ENCODE measurements at regions of chr5 and their contacts with region 1.

Region 1: GRCh38 chr5:53123702-53124101 is 14.1 kb upstream of the MOCS2 start:
- DNase-seq: peak; percentile 21
- H3K4me3 ChIP-seq: no peak overlapping the region
- H3K27ac ChIP-seq: no peak overlapping the region
- H3K4me1 ChIP-seq: no peaks in the 10 kb centered on the region
- H3K27me3 ChIP-seq: peaks cover 0 to 3% of the 10 kb centered on the region in 2 experiments
- CTCF ChIP-seq: no peak
- POLR2A ChIP-seq: no peak

Region 2: DNA sequence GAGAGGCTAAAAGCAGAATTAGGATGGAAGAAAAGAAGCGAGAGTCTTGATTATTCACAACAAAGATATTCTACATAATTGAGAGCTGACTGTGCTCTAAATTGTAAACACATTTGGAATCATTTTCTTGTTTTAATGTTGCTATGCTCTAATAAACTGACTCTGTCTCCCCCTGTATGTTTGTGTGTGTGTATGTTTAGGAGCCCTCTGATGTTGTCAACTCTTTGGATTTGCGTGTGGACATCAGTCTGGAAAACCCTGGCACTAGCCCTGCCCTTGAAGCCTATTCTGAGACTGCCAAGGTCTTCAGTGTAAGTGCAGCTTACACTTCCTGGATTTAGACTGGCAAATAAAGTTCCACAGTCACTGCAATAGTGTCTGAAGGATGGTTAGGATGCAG is 52.0 kb before region 1 on chr5:
- CTCF ChIA-PET with region 1: no interaction called
- POLR2A ChIA-PET with region 1: no interaction called
- dilution Hi-C with region 1: no loop called
- intact Hi-C with region 1: no loop called
- DNase-seq: no peak
- H3K4me3 ChIP-seq: no peak overlapping the region
- H3K27ac ChIP-seq: no peak overlapping the region
- H3K4me1 ChIP-seq: peaks cover 14% of the 10 kb centered on the region
- H3K27me3 ChIP-seq: no peaks in the 10 kb centered on the region
- CTCF ChIP-seq: no peak
- POLR2A ChIP-seq: no peak

Region 3: DNA sequence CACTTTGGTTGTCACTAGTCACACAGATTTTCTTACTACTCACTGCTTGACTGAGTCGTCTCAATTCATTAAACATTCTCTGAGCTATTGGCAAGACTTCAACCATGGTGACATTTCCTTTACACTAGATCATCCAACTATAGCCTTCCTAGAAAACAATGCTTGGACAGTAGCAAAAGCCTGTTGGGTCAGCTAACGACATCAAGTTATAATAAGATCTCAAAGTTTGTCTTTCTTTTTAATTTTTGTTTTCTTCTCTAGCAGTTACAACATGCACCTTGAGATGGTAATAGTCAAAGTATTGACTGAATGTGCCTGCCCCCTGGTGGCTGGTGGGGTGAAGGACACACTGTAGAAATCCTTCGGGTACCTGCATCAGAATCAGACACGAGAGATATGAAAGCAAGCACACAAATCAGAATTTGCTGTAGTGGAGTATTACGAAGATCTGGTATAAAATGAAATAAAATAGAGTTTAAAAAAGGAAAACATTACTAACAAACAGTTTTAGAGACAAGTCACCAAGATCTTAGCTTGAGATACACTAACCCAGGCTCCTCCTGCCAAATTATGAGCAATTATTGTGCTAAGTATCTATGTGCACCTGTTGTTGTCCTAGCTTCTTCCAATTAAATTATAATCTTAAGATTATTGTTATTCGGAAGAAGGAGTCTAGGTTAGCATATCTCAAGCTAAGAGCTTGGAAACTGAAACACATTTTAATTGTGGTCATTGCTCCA is 1105.5 kb after region 1 on chr5:
- CTCF ChIA-PET with region 1: interaction called, 17 read pairs
- POLR2A ChIA-PET with region 1: no interaction called
- dilution Hi-C with region 1: no loop called
- intact Hi-C with region 1: no loop called
- DNase-seq: peak; percentile 62
- H3K4me3 ChIP-seq: no peak overlapping the region
- H3K27ac ChIP-seq: no peak overlapping the region
- H3K4me1 ChIP-seq: no peaks in the 10 kb centered on the region
- H3K27me3 ChIP-seq: peaks cover 0 to 3% of the 10 kb centered on the region in 2 experiments
- CTCF ChIP-seq: peak; percentile 78 to 88
- POLR2A ChIP-seq: no peak

Region 4: DNA sequence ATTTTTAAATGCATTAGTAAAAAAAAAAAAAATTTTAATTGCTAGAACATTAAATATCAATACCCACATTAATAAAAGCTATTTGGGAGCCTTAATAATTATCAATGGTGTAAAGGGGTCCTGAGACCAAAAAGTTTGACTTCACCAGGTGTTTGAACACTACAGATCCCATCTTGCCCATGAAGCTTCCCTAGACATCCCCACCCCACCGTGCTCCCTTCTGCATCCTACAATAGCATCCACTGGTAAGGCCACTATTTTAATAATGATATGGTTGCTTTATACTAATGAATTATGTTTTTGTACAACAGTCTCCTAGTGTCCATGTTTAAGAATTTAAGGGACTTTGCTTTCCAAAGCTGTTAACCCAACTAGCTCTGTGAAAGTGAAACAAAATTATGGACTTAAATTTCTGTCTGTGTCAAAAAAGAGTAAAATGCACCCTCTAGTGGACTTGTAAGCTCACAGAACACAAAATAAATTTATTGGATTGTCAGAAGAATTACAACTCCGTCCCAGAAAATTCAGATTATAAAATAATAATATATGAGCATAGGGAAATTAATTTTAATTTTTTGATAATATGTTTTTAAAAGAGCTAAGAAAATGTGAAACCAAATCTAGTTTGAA is 1110.7 kb after region 1 on chr5:
- CTCF ChIA-PET with region 1: interaction called, 17 read pairs
- POLR2A ChIA-PET with region 1: no interaction called
- dilution Hi-C with region 1: no loop called
- intact Hi-C with region 1: no loop called
- DNase-seq: peak; percentile 38
- H3K4me3 ChIP-seq: no peak overlapping the region
- H3K27ac ChIP-seq: no peak overlapping the region
- H3K4me1 ChIP-seq: no peaks in the 10 kb centered on the region
- H3K27me3 ChIP-seq: peaks cover 0 to 5% of the 10 kb centered on the region in 2 experiments
- CTCF ChIP-seq: peak; percentile 21 to 36
- POLR2A ChIP-seq: no peak